Activated naive CD4-positive, alpha-beta T cell treated with anti-CD3 and anti-CD28 coated beads for 36 hours (primary cell): ENCODE measurements at regions of chr2 and their contacts with region 1.

Region 1: DNA sequence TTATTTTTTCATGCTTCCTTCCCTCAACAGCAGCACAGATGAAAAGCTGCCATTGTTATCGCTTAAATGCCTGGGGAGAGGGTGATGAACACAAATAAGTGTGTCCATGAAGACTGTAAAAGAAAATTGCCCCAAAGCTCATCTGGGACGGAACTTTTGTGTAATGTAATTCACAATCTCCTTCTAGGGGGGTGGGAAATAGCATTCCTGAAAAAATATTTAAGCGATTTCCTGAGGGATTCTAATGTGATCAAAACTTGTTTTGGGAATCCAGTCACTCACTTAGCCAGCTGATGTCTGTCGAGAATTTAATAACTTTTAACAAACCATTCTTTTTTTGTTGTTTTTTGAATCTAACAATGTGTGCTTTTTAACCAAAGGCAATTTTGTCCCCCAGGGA is 427.9 kb downstream of the PLCL1 start:
- DNase-seq: no peak
- H3K4me3 Mint-ChIP-seq: no peak overlapping the region
- H3K27ac Mint-ChIP-seq: no peak overlapping the region
- H3K4me1 Mint-ChIP-seq: no peaks in the 10 kb centered on the region
- H3K27me3 Mint-ChIP-seq: peaks cover 2% of the 10 kb centered on the region

Region 2: DNA sequence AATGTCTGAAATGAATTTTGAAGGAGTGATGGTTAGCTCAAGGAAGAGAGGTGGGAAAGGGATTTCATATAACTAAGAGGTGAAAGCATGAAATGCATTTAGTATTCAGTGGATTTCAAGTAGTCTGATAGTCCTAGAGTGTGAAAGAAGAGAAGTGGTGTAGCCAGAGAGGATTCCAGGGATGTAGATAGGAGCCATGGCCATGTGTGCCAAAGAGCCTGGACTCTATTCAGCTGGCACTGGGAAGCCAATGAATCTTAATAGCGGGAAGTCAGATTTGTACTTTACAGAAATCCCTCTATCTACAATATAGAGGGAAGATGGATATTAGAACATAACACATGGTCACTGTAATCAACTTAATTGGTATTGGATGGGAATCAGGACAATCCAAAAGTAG is 438.8 kb before region 1 on chr2:
- CTCF ChIA-PET with region 1: no interaction called
- intact Hi-C with region 1: loop called (anchors 5 kb)
- DNase-seq: no peak
- H3K4me3 Mint-ChIP-seq: no peak overlapping the region
- H3K27ac Mint-ChIP-seq: no peak overlapping the region
- H3K4me1 Mint-ChIP-seq: peaks cover 14% of the 10 kb centered on the region
- H3K27me3 Mint-ChIP-seq: peaks cover 4% of the 10 kb centered on the region